Gastrocnemius medialis (tissue), 4 donors: ENCODE measurements at regions of chr1 and their contacts with region 1.

Region 1: GRCh38 chr1:16440470-16441281 is at the start of gene NECAP2:
- DNase-seq: peak; percentile 85 to 86
- ATAC-seq: peak; percentile 96 to 99
- H3K4me3 ChIP-seq: peak within 1 kb of the TSS; percentile 76 to 99 (median 88)
- H3K27ac ChIP-seq: peak within 1 kb of the TSS; percentile 77 to 86 (median 82)
- H3K4me1 ChIP-seq: peaks cover 8 to 16% of the 10 kb centered on the region in 2 donors
- H3K27me3 ChIP-seq: no peaks in the 10 kb centered on the region
- CTCF ChIP-seq: peak; percentile 63 to 93 (median 88)
- POLR2A ChIP-seq: peak in 1 of 2 donors; percentile 42
- total RNA-seq, gene NECAP2: 8.9 to 12.6 (median 10.4) TPM

Region 2: GRCh38 chr1:15741183-15741850 is 699.4 kb before region 1 on chr1:
- in situ Hi-C with region 1: no loop called
- intact Hi-C with region 1: no loop called
- DNase-seq: peak; percentile 71 to 87
- ATAC-seq: peak; percentile 56 to 67
- H3K4me3 ChIP-seq: no peak overlapping the region
- H3K27ac ChIP-seq: peak overlapping the region; percentile 3 to 92 (median 64)
- H3K4me1 ChIP-seq: peaks cover 37% of the 10 kb centered on the region in 2 donors
- H3K27me3 ChIP-seq: no peaks in the 10 kb centered on the region
- CTCF ChIP-seq: peak; percentile 89 to 95 (median 92)
- POLR2A ChIP-seq: no peak

Region 3: GRCh38 chr1:16393574-16394521 is 46.8 kb before region 1 on chr1:
- in situ Hi-C with region 1: no loop called
- intact Hi-C with region 1: loop called (anchors 5 kb)
- DNase-seq: peak in 1 of 2 donors; percentile 29
- ATAC-seq: no peak
- H3K4me3 ChIP-seq: no peak overlapping the region
- H3K27ac ChIP-seq: peak overlapping the region in 3 of 4 donors; percentile 19 to 61 (median 29)
- H3K4me1 ChIP-seq: peaks cover 56 to 57% of the 10 kb centered on the region in 2 donors
- H3K27me3 ChIP-seq: no peaks in the 10 kb centered on the region
- CTCF ChIP-seq: no peak
- POLR2A ChIP-seq: no peak

Region 4: GRCh38 chr1:16498573-16499413 is 58.1 kb after region 1 on chr1:
- in situ Hi-C with region 1: no loop called
- intact Hi-C with region 1: loop called (anchors 5 kb)
- DNase-seq: peak; percentile 67 to 76
- ATAC-seq: peak; percentile 88 to 90
- H3K4me3 ChIP-seq: peak overlapping the region; percentile 67 to 89 (median 82)
- H3K27ac ChIP-seq: peak overlapping the region; percentile 65 to 84 (median 78)
- H3K4me1 ChIP-seq: peaks cover 0 to 9% of the 10 kb centered on the region in 2 donors
- H3K27me3 ChIP-seq: no peaks in the 10 kb centered on the region
- CTCF ChIP-seq: peak in 2 of 5 experiments; percentile 11 to 25
- POLR2A ChIP-seq: peak in 1 of 2 donors; percentile 23